PC-9 (cell line): ENCODE measurements at regions of chr20 and their contacts with region 1.

Region 1: GRCh38 chr20:34334654-34335407 is 28.2 kb upstream of the ITCH start:
- DNase-seq: peak; percentile 43 to 60
- H3K4me3 ChIP-seq: no peak overlapping the region
- H3K27ac ChIP-seq: peak overlapping the region; percentile 92
- H3K4me1 ChIP-seq: peaks cover 40% of the 10 kb centered on the region
- H3K27me3 ChIP-seq: no peaks in the 10 kb centered on the region
- CTCF ChIP-seq: no peak

Region 2: DNA sequence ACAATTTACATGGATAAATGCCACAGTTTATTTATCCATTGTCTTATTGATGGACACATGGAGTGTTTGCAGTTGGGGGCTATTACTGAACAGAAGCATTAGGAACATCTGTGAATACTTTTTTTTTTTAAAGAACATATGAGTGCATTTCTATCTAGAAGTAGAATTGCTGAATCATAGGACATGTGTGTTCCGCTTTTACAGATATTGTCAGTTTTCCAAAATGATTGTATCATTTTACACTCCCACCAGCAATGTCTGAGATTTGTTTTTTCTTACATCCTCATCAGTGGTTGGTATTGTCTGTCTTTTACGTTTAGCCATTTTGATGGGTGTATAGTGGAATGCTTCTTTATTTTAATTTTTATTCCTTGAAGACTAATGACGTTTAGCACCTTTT is 135.6 kb before region 1 on chr20:
- CTCF ChIA-PET with region 1: interaction called, 12 read pairs
- POLR2A ChIA-PET with region 1: no interaction called
- intact Hi-C with region 1: no loop called
- DNase-seq: no peak
- H3K4me3 ChIP-seq: no peak overlapping the region
- H3K27ac ChIP-seq: no peak overlapping the region
- H3K4me1 ChIP-seq: no peaks in the 10 kb centered on the region
- H3K27me3 ChIP-seq: no peaks in the 10 kb centered on the region
- CTCF ChIP-seq: no peak

Region 3: DNA sequence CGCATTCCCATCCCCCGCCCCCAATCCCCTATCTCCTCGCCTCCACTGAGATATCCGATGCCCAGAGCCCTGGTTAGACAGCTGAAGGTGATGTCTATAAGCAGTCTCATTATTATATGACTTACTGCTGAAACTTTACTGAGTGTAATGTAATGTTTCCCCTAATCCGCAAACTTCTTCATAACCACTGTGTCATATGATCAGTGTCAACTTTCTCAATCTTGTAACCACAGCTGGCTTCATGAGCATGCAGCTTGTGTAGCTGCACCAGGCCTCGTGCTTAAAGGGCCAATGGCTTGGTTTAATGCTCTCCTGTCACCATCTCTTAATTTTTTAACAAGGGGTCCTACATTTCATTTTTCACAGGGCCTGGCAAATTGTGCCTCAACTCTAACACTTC is 85.5 kb before region 1 on chr20:
- CTCF ChIA-PET with region 1: no interaction called
- POLR2A ChIA-PET with region 1: no interaction called
- intact Hi-C with region 1: no loop called
- DNase-seq: no peak
- H3K4me3 ChIP-seq: no peak overlapping the region
- H3K27ac ChIP-seq: no peak overlapping the region
- H3K4me1 ChIP-seq: peaks cover 5% of the 10 kb centered on the region; the same call in 1 of the 2 replicates
- H3K27me3 ChIP-seq: no peaks in the 10 kb centered on the region
- CTCF ChIP-seq: no peak

Region 4: GRCh38 chr20:34350095-34350494 is 15.3 kb after region 1 on chr20:
- CTCF ChIA-PET with region 1: interaction called, 7 read pairs
- POLR2A ChIA-PET with region 1: interaction called, 15 read pairs
- intact Hi-C with region 1: no loop called
- DNase-seq: peak in 1 of 2 experiments; percentile 96
- H3K4me3 ChIP-seq: peak overlapping the region; percentile 2; the same call in 1 of the 2 replicates
- H3K27ac ChIP-seq: peak overlapping the region; percentile 94
- H3K4me1 ChIP-seq: peaks cover 30% of the 10 kb centered on the region
- H3K27me3 ChIP-seq: no peaks in the 10 kb centered on the region
- CTCF ChIP-seq: no peak

Region 5: DNA sequence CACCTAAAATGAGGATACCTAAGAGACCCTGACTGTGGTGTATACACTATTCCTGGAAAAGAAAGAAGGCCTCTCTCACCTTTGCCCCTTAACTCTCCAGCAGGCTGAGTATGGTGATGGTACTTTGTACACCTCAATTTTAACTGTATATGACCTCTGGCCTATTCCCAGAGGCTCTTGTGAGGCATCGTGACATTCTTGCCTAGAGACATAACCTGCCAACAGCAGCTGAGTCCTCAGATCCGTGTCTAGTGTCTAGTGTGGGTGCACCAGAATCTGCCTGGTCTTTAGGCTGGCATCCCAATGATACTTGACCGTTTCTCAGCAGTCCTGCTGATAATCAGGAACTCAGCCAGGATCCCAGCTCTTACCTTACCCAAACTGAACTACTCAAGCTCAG is 389.3 kb after region 1 on chr20:
- CTCF ChIA-PET with region 1: no interaction called
- POLR2A ChIA-PET with region 1: interaction called, 16 read pairs
- intact Hi-C with region 1: no loop called
- DNase-seq: no peak
- H3K4me3 ChIP-seq: no peak overlapping the region
- H3K27ac ChIP-seq: no peak overlapping the region
- H3K4me1 ChIP-seq: no peaks in the 10 kb centered on the region
- H3K27me3 ChIP-seq: no peaks in the 10 kb centered on the region
- CTCF ChIP-seq: no peak